Calu3 (cell line): ENCODE measurements at regions of chr3 and their contacts with region 1.

Region 1: DNA sequence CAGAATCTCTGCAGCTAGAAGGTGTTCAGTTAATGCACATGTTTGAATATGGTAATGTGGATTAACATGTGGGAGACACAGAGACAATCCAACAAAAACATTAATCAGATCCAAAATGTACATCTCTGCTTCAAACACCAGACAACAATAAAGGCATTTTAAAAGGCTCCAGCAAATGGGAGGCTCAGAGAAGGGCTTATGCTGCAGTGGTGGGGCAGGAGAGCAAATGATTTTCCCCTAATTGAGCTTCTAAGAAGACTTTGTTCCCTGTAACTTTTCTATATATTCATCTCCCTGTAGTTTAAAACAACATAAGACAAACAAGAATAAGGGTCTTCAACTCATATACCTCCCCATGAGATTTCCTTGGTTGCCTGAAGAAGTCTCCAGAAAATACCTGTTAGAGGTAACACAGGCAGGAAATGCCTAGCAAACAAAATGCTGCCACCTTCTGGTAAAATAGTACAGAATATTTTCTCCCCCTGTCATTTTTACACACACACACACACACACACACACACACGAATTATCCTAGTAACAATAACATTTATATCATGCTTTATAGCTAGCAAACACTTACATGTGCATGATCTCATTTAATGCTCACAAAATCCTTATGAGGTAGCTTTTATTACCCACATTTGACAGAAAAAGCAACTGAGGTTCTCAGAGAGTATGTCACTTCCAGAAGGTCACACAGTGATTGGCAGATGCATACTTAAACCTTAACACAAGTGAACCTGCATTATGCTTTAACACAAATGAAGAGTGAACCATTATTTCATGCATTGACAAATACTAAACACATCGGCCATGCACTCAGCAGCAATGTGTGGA is 123.4 kb upstream of the MB21D2 start:
- DNase-seq: peak; percentile 30
- H3K4me3 Mint-ChIP-seq: no peak overlapping the region
- H3K27ac Mint-ChIP-seq: no peak overlapping the region
- H3K4me1 Mint-ChIP-seq: no peaks in the 10 kb centered on the region
- H3K27me3 Mint-ChIP-seq: no peaks in the 10 kb centered on the region
- CTCF ChIP-seq: peak; percentile 33

Region 2: DNA sequence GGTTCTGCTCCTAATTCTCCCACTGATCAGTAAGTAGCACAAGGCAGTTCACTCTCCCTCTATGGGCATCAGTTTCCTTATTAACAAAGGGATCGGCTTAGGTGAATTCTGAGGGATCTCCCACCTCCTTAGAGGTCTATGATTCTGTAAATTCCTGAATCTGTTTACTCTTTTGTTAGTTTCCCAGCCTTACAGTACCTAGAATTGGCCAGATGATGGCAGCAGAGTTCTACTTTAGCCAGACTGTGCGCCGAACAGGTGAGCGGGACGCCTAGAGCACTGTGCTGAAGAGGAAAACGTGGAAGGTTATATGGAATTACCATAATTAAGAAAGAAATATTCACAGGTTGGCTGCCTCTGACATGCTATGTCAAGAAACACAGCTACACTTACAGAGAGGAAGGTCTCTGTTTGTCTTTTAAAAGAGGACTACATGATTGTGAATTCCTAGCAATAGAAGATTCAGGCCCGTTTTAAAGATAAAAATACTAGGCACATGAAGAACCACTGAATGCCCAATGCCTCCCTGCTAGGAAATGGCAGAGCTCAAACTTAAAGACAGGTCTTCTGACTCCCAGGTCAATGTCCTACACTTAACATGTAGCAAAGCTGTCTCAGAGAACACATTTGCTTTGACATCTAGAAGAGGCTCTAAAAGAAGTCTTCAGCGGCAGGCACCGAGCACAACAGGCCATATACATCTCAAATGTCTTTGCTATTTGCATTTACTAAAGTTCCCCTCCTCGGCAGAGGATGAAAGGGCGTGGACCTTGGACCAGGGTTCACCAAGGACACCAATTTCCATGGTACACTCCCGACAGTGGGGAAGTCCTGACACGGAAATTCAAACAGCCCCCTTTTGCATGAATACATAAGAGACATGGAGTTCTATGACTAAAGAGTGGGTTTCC is 573.6 kb before region 1 on chr3:
- CTCF ChIA-PET with region 1: no interaction called
- intact Hi-C with region 1: loop called (anchors 10 kb)
- DNase-seq: peak; percentile 81
- H3K4me3 Mint-ChIP-seq: no peak overlapping the region
- H3K27ac Mint-ChIP-seq: no peak overlapping the region
- H3K4me1 Mint-ChIP-seq: no peaks in the 10 kb centered on the region
- H3K27me3 Mint-ChIP-seq: peaks cover 32% of the 10 kb centered on the region
- CTCF ChIP-seq: peak; percentile 96

Region 3: DNA sequence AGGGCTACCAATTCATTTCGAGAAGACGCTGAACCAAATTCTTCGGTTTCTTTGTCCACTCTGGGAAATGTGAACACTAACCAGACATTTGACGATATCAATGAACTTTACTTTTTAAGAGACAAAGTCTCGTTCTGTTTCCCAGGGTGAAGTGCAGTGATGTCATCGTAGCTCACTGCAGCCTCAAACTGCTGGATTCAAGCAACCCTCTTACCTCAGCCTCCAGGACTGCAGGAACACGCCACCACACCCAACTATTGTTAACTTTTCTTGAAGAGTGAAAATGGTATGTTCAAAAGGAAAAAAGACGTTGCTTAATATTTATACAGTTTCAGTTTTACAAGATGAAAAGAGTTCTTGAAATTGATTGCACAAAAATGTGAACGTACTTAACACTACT is 154.0 kb before region 1 on chr3:
- CTCF ChIA-PET with region 1: no interaction called
- intact Hi-C with region 1: loop called (anchors 5 kb)
- DNase-seq: peak; percentile 77
- H3K4me3 Mint-ChIP-seq: peak overlapping the region; percentile 60
- H3K27ac Mint-ChIP-seq: peak overlapping the region; percentile 88
- H3K4me1 Mint-ChIP-seq: peaks cover 93% of the 10 kb centered on the region
- H3K27me3 Mint-ChIP-seq: no peaks in the 10 kb centered on the region
- CTCF ChIP-seq: no peak

Region 4: DNA sequence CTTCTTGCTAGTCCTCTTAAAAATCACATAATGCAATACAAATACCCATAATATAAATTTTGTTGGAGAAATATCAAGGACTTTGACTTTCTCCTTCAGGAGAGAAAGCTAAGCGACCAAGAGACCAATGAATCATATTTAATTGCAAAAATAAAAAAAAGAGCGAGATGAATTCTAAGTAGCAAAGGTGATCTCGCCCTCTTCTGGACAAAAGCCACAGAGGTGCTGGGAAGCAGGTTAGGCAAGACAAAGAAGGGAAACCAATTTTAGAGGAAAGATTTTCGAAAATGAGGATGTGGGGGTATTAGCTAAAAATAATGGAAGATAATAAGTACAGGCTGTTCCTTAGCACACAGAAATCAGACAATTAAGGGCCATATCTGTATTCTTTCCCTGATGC is 88.5 kb after region 1 on chr3:
- CTCF ChIA-PET with region 1: interaction called, 5 read pairs
- intact Hi-C with region 1: loop called (anchors 2 kb)
- DNase-seq: peak; percentile 53
- H3K4me3 Mint-ChIP-seq: no peak overlapping the region
- H3K27ac Mint-ChIP-seq: no peak overlapping the region
- H3K4me1 Mint-ChIP-seq: peaks cover under 1% of the 10 kb centered on the region
- H3K27me3 Mint-ChIP-seq: peaks cover 28% of the 10 kb centered on the region
- CTCF ChIP-seq: no peak

Region 5: GRCh38 chr3:193572426-193572908 is 531.4 kb after region 1 on chr3:
- CTCF ChIA-PET with region 1: no interaction called
- intact Hi-C with region 1: loop called (anchors 5 kb)
- DNase-seq: peak; percentile 83
- H3K4me3 Mint-ChIP-seq: no peak overlapping the region
- H3K27ac Mint-ChIP-seq: no peak overlapping the region
- H3K4me1 Mint-ChIP-seq: peaks cover 13% of the 10 kb centered on the region
- H3K27me3 Mint-ChIP-seq: no peaks in the 10 kb centered on the region
- CTCF ChIP-seq: peak; percentile 82